IMR-90 (cell line): ENCODE measurements at regions of chr9 and their contacts with region 1.

Region 1: DNA sequence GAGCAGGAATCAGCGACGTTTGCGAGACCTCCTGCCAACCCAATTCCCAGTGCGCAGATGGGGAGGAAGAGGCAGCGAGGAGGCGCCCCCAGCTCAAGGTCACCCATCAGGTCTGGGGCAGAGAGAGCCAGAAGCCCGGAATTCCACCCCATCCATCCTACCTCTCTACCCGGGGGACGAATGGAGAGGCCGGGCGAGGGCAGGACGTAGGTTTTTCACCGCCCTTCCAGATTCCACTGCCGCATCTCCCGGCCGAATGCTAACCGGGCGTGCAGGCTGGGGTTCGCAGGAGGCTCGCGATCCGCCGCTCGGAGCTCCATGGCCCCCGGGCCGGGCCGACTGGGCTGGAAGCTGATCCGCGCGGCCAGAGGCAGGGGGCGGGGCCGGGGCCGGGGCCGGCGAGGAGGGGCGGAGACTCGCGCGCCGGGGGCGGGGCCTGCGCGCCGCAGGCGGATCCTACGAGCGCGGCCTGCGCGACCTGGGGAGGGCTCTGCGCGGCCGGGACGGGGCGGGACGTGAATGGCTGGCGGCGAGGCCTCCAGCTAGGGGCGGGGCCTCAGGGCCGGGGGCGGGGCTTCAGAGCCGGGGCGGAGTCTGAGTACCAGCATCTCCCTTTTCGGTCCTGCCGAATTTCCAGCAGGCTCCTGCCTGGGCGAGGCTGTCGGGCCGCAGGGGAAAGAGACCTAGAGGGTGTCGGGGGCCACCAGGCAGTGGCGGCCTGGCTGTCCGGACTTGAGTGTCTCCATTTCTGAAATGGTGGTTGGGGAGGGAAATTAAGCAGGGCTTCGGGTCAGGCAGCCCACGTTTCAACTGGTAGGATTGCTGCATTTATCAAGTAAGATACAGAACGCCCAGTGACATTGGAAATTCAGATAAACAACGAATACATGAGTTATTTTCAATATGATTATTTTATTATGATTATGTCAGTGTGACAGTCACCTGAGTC is at the start of gene ST6GALNAC4:
- DNase-seq: peak; percentile 88
- ATAC-seq: peak; percentile 95
- H3K4me3 ChIP-seq: peak within 1 kb of the TSS; percentile 66
- H3K27ac ChIP-seq: peak within 1 kb of the TSS; percentile 68
- H3K4me1 ChIP-seq: peaks cover 27% of the 10 kb centered on the region
- H3K27me3 ChIP-seq: no peaks in the 10 kb centered on the region
- CTCF ChIP-seq: no peak
- POLR2A ChIP-seq: peak; percentile 41; the same call in 1 of the 2 replicates
- RAD21 ChIP-seq: no peak
- total RNA-seq, gene ST6GALNAC4: 11.9 and 12.5 TPM in 2 replicates

Region 2: GRCh38 chr9:127205183-127205470 is 711.8 kb before region 1 on chr9:
- CTCF ChIA-PET with region 1: no interaction called
- POLR2A ChIA-PET with region 1: no interaction called
- dilution Hi-C with region 1: no loop called
- in situ Hi-C with region 1: no loop called
- intact Hi-C with region 1: loop called (anchors 10 kb)
- DNase-seq: peak; percentile 49
- ATAC-seq: peak; percentile 69
- H3K4me3 ChIP-seq: no peak overlapping the region
- H3K27ac ChIP-seq: no peak overlapping the region
- H3K4me1 ChIP-seq: peaks cover 2% of the 10 kb centered on the region; the same call in 1 of the 2 replicates
- H3K27me3 ChIP-seq: peaks cover 9% of the 10 kb centered on the region; the same call in 1 of the 2 replicates
- CTCF ChIP-seq: peak; percentile 49
- POLR2A ChIP-seq: no peak
- RAD21 ChIP-seq: peak; percentile 44

Region 3: GRCh38 chr9:127503947-127504782 is 412.8 kb before region 1 on chr9:
- CTCF ChIA-PET with region 1: no interaction called
- POLR2A ChIA-PET with region 1: no interaction called
- dilution Hi-C with region 1: no loop called
- in situ Hi-C with region 1: no loop called
- intact Hi-C with region 1: loop called (anchors 10 kb)
- DNase-seq: peak; percentile 82
- ATAC-seq: peak; percentile 72
- H3K4me3 ChIP-seq: no peak overlapping the region
- H3K27ac ChIP-seq: peak overlapping the region; percentile 47
- H3K4me1 ChIP-seq: peaks cover 7% of the 10 kb centered on the region; the same call in 1 of the 2 replicates
- H3K27me3 ChIP-seq: no peaks in the 10 kb centered on the region
- CTCF ChIP-seq: peak; percentile 85
- POLR2A ChIP-seq: 0 out of 2 replicates have a peak, but pooled peaks have one; percentile 47
- RAD21 ChIP-seq: peak; percentile 86

Region 4: DNA sequence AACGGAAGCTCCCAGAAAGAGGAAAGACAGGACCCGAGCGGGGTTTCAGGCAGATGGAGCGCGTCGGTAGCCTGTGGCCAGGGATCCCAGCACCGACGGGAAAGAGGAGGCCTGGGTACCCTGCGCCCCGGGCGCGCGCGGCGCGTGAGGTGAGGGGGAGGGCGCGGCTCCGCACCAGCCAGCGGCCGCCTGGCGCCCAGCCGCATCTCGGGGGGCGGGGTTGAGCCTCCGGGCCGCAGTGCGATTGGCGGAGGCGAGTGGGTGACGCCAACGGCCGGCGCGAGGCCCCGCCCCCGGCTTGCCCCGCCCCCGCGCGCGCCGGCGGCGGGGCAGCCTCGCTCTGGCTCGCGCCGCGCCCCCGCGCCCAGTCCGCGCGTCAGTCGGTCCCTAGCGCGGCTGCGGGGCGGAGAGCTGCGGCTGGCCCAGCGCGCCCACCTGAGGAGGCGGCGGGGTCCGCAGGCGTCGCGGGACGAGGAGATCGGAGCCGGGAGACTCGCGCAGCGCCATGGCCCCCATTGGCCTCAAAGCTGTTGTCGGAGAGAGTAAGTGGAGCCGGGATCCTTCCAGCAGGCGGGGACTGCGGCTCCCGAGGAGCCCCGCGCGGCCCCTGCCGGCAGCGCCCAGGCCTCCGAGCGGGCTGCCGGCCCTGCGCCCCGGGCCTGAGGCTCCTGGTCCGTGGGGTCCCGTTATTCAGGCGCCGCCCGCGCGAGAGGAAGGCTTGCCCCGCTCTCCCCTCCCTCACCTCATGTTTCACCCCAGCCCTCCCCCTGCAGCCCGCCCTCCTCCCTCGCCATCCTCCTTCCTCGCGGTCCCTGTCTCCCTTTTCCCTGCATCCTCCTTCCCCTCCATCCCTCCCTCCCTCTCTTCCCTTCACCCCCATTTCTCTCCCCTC is 304.8 kb before region 1 on chr9 and contains the start of gene STXBP1:
- CTCF ChIA-PET with region 1: no interaction called
- POLR2A ChIA-PET with region 1: no interaction called
- dilution Hi-C with region 1: no loop called
- in situ Hi-C with region 1: no loop called
- intact Hi-C with region 1: loop called (anchors 10 kb)
- DNase-seq: peak; percentile 76
- ATAC-seq: peak; percentile 86
- H3K4me3 ChIP-seq: peak within 1 kb of the TSS; percentile 97
- H3K27ac ChIP-seq: peak within 1 kb of the TSS; percentile 76
- H3K4me1 ChIP-seq: peaks cover 8% of the 10 kb centered on the region
- H3K27me3 ChIP-seq: no peaks in the 10 kb centered on the region
- CTCF ChIP-seq: peak; percentile 32; the same call in 1 of the 2 replicates
- POLR2A ChIP-seq: peak; percentile 76
- RAD21 ChIP-seq: no peak
- total RNA-seq, gene STXBP1: 15.8 and 18.9 TPM in 2 replicates

Region 5: GRCh38 chr9:127734747-127735529 is 182.0 kb before region 1 on chr9 and contains the start of gene TOR2A:
- CTCF ChIA-PET with region 1: interaction called, 6 read pairs
- POLR2A ChIA-PET with region 1: no interaction called
- dilution Hi-C with region 1: no loop called
- in situ Hi-C with region 1: no loop called
- intact Hi-C with region 1: loop called (anchors 1 kb)
- DNase-seq: peak; percentile 95
- ATAC-seq: peak; percentile 96
- H3K4me3 ChIP-seq: peak within 1 kb of the TSS; percentile 60
- H3K27ac ChIP-seq: peak within 1 kb of the TSS; percentile 74
- H3K4me1 ChIP-seq: peaks cover 6% of the 10 kb centered on the region
- H3K27me3 ChIP-seq: 0 out of 2 replicates have a peak, but pooled peaks cover 3% of the 10 kb centered on the region
- CTCF ChIP-seq: peak; percentile 99
- POLR2A ChIP-seq: peak; percentile 73
- RAD21 ChIP-seq: peak; percentile 93
- total RNA-seq, gene TOR2A: 0.90 and 1.1 TPM in 2 replicates

Region 6: DNA sequence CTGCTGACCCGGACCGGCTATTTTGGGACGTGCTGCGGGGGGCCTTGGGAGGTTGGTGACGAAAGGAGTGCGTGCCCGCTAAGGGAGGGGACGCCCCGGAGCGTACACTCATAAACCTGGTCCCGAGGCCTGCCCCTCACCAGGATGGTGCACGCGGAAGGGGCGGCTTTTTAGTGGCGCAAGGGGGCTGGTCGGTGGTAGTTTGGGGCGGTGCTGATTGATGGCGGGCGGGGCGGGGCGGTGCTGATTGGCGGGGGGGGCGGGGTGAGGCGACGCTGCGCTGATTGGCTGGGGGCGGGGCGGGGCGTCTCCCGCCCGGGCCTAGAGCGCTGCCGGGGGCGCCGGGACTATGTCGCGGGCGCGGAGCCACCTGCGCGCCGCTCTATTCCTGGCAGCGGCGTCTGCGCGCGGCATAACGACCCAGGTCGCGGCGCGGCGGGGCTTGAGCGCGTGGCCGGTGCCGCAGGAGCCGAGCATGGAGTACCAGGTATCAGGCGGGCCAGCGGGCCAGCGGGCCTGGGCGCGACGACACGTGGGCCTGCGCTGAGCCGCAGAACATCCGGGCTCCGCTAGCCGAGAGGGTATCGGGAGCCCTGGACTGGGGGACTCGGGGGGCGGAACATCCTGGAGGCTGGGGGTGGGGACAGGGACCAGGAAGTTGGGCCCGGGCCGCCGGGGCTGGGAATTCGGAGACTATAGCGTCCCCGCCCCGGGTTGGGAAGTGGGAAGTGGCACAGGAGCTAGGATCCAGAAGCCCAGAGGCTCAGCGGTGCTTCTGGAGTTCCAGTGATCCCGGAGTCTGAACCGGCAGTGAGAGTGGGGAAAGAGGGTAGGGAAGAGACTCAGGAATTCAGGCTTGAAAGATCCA is 114.1 kb before region 1 on chr9 and contains the start of gene FPGS:
- CTCF ChIA-PET with region 1: no interaction called
- POLR2A ChIA-PET with region 1: no interaction called
- dilution Hi-C with region 1: no loop called
- in situ Hi-C with region 1: no loop called
- intact Hi-C with region 1: loop called (anchors 5 kb)
- DNase-seq: peak; percentile 85
- ATAC-seq: peak; percentile 93
- H3K4me3 ChIP-seq: peak within 1 kb of the TSS; percentile 71
- H3K27ac ChIP-seq: peak within 1 kb of the TSS; percentile 79
- H3K4me1 ChIP-seq: peaks cover 15% of the 10 kb centered on the region
- H3K27me3 ChIP-seq: no peaks in the 10 kb centered on the region
- CTCF ChIP-seq: no peak
- POLR2A ChIP-seq: peak; percentile 78
- RAD21 ChIP-seq: no peak
- total RNA-seq, gene FPGS: 43.9 and 45.5 TPM in 2 replicates

Region 7: GRCh38 chr9:127838375-127839078 is 78.4 kb before region 1 on chr9:
- CTCF ChIA-PET with region 1: no interaction called
- POLR2A ChIA-PET with region 1: no interaction called
- dilution Hi-C with region 1: no loop called
- in situ Hi-C with region 1: no loop called
- intact Hi-C with region 1: loop called (anchors 5 kb)
- DNase-seq: peak; percentile 93
- ATAC-seq: peak; percentile 92
- H3K4me3 ChIP-seq: no peak overlapping the region
- H3K27ac ChIP-seq: peak overlapping the region; percentile 78
- H3K4me1 ChIP-seq: peaks cover 36% of the 10 kb centered on the region
- H3K27me3 ChIP-seq: no peaks in the 10 kb centered on the region
- CTCF ChIP-seq: no peak
- POLR2A ChIP-seq: no peak
- RAD21 ChIP-seq: 0 out of 2 replicates have a peak, but pooled peaks have one; percentile 5